Activated naive CD4-positive, alpha-beta T cell treated with anti-CD3 and anti-CD28 coated beads, Interleukin-2, amount 10 ng/mL, durations not matched to agents 7 days and 5 days (primary cell): ENCODE measurements at regions of chr2 and their contacts with region 1.

Region 1: GRCh38 chr2:161946489-161947107 is 127.4 kb downstream of the DPP4 start:
- DNase-seq: peak; percentile 30
- H3K4me3 Mint-ChIP-seq: no peak overlapping the region
- H3K27ac Mint-ChIP-seq: no peak overlapping the region
- H3K4me1 Mint-ChIP-seq: peaks cover 35% of the 10 kb centered on the region
- H3K27me3 Mint-ChIP-seq: no peaks in the 10 kb centered on the region

Region 2: GRCh38 chr2:161586517-161587167 is 360.0 kb before region 1 on chr2:
- CTCF ChIA-PET with region 1: interaction called, 61 read pairs
- DNase-seq: no peak
- H3K4me3 Mint-ChIP-seq: no peak overlapping the region
- H3K27ac Mint-ChIP-seq: no peak overlapping the region
- H3K4me1 Mint-ChIP-seq: no peaks in the 10 kb centered on the region
- H3K27me3 Mint-ChIP-seq: peaks cover 11% of the 10 kb centered on the region

Region 3: GRCh38 chr2:161592713-161593112 is 353.9 kb before region 1 on chr2:
- CTCF ChIA-PET with region 1: interaction called, 61 read pairs
- DNase-seq: no peak
- H3K4me3 Mint-ChIP-seq: no peak overlapping the region
- H3K27ac Mint-ChIP-seq: no peak overlapping the region
- H3K4me1 Mint-ChIP-seq: peaks cover 19% of the 10 kb centered on the region
- H3K27me3 Mint-ChIP-seq: peaks cover 19% of the 10 kb centered on the region

Region 4: DNA sequence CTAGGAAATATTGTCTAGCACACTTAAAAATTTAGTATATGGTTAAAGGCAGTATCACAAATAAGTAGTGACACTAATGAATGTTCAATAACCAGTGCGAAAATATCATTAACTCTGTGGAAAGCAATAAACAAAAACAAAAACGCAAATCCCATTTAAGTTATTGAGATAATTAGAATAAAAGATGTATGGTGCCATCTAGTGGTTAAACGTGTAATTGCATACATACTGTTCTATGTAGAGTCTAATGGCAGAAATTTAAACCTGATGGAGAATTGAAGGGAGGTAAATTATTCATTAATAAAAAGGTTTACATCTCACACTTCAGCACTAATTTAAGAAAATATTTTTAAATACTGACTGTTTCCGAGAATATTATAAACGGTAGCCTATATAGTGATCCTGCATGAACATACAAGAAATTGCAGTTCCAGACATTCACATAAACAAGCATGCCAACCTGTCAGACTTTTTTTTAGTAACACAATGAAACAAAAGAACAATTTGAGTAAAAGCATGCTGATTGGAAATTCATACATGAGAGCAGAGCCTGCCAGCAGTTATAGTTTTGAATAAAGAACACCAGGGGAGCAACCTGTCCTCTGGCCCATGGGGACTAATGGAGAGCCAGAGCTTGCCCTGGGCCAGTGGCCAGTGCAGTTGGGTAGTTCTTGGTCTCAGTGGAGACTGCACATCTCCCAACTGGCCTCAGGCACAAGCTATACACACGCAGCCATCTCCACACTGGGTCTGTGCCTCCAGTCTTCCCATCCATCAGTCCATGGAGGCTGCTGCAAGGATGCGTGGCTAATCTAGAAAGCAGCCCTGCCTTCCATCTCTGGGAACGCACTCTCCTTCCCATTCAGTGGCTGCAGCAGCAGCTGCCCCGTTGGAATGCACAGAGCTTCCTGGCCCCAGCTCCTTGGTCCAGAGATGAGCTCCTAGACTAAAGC is 177.5 kb after region 1 on chr2:
- CTCF ChIA-PET with region 1: interaction called, 37 read pairs
- DNase-seq: no peak
- H3K4me3 Mint-ChIP-seq: no peak overlapping the region
- H3K27ac Mint-ChIP-seq: no peak overlapping the region
- H3K4me1 Mint-ChIP-seq: peaks cover 18% of the 10 kb centered on the region
- H3K27me3 Mint-ChIP-seq: no peaks in the 10 kb centered on the region